Endothelial cell of umbilical vein (primary cell): ENCODE measurements at regions of chr5 and their contacts with region 1.

Region 1: GRCh38 chr5:142713121-142713706 is 27.3 kb upstream of the FGF1 start:
- DNase-seq: peak; percentile 90
- H3K4me3 ChIP-seq: peak overlapping the region in 2 of 3 experiments; percentile 39 to 44
- H3K27ac ChIP-seq: peak overlapping the region; percentile 43
- H3K4me1 ChIP-seq: peaks cover 11% of the 10 kb centered on the region
- H3K27me3 ChIP-seq: peaks cover 0 to 5% of the 10 kb centered on the region in 2 experiments
- CTCF ChIP-seq: peak; percentile 83 to 98
- POLR2A ChIP-seq: no peak

Region 2: DNA sequence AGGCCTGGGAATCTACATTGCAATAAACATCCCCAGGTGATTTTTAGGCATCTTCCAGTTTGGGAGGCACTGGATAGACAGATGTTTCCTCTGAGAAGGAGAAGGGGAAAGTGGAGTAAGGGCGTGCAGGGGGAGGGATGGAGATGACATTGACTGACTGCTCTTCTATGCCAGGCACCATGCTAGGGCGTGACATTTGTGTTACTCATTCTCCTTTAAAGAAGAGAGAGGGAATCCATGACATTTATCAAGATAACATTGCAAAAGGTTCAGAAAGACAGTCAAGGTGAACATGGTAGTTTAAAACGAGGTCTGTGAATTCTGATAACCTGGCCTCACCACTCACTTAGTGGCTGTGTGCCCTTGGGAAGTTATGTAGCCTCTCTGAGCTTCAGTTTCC is 63.2 kb before region 1 on chr5:
- CTCF ChIA-PET with region 1: interaction called, 80 read pairs
- POLR2A ChIA-PET with region 1: no interaction called
- dilution Hi-C with region 1: no loop called
- intact Hi-C with region 1: loop called (anchors 1 kb)
- DNase-seq: no peak
- H3K4me3 ChIP-seq: no peak overlapping the region
- H3K27ac ChIP-seq: no peak overlapping the region
- H3K4me1 ChIP-seq: peaks cover 6% of the 10 kb centered on the region
- H3K27me3 ChIP-seq: peaks cover 2 to 5% of the 10 kb centered on the region in 2 experiments
- CTCF ChIP-seq: no peak
- POLR2A ChIP-seq: no peak

Region 3: GRCh38 chr5:142699184-142699720 is 14.0 kb before region 1 on chr5:
- CTCF ChIA-PET with region 1: interaction called, 23 read pairs
- POLR2A ChIA-PET with region 1: no interaction called
- dilution Hi-C with region 1: no loop called
- intact Hi-C with region 1: no loop called
- DNase-seq: peak; percentile 83
- H3K4me3 ChIP-seq: no peak overlapping the region
- H3K27ac ChIP-seq: no peak overlapping the region
- H3K4me1 ChIP-seq: no peaks in the 10 kb centered on the region
- H3K27me3 ChIP-seq: peaks cover 0 to 6% of the 10 kb centered on the region in 2 experiments
- CTCF ChIP-seq: peak; percentile 91 to 93
- POLR2A ChIP-seq: no peak

Region 4: DNA sequence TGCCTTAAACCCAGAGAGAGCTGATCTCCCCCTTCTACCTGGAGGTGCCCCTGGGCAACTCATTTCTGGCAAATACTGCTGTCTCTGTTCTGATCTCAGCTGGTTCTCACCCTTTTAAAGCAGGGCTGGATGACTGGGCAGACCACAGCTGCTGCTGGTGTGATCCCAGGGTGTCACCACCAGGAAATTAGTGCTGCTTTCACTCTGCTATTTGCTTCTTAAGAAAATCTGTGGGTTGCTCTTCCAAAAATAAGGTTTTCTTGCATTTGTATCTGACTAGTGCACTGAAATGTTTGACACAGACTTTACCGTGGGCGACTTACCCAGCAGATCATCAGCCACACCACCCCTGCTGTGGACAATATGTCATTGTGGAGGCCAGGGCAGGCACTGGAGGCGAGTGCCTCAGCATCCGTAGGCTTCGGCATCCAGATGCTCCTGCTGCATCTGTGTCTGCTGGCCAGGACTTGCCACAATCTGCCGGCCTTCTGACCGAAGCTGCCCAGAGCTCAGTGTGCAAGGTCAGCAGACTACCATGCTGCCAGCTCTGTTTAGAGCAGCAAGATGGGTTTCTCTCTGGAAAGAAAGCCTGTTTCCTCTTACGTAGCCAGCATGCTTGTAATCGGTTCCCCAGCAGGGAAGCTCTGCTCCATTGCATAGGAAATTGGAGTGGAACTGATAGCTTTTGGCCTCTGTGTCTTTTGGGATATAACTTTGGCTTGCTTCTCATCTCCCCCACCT is 70.6 kb after region 1 on chr5:
- CTCF ChIA-PET with region 1: interaction called, 13 read pairs
- POLR2A ChIA-PET with region 1: no interaction called
- dilution Hi-C with region 1: no loop called
- intact Hi-C with region 1: no loop called
- DNase-seq: no peak
- H3K4me3 ChIP-seq: no peak overlapping the region
- H3K27ac ChIP-seq: no peak overlapping the region
- H3K4me1 ChIP-seq: peaks cover 8% of the 10 kb centered on the region
- H3K27me3 ChIP-seq: no peaks in the 10 kb centered on the region
- CTCF ChIP-seq: no peak
- POLR2A ChIP-seq: no peak

Region 5: DNA sequence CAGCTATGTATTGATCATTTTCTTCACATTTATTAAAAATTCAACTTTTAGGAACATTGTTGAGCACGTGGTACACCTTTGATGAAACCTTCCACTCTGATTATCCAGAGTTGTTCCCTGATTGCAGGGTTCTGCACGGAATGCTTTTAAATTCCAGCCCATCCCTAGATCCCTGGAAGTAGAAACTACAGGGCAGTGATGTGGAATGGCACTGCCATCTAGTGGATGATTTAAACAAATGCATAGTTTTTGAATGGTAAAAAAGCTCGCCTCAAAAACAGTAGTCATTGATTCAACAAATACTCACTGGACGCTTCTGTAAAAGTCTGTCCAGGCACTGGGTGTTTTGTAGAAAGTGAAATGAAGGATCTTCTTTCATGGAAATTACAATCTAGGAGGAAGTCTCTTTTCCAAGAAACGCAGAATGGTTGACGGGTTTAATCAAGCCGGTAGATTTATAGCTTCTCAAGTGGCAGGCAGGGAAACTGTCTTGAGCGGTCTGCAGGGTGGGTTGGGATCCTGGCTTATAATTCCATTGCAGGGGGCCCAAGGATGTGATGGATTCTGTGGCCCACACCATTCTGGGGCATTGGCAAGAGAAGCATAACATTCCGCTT is 175.4 kb after region 1 on chr5:
- CTCF ChIA-PET with region 1: interaction called, 1,173 read pairs
- POLR2A ChIA-PET with region 1: no interaction called
- dilution Hi-C with region 1: loop called (anchors 25 kb)
- intact Hi-C with region 1: loop called (anchors 1 kb)
- DNase-seq: peak; percentile 55
- H3K4me3 ChIP-seq: no peak overlapping the region
- H3K27ac ChIP-seq: no peak overlapping the region
- H3K4me1 ChIP-seq: peaks cover 3% of the 10 kb centered on the region
- H3K27me3 ChIP-seq: no peaks in the 10 kb centered on the region
- CTCF ChIP-seq: peak; percentile 50 to 60
- POLR2A ChIP-seq: no peak

Region 6: DNA sequence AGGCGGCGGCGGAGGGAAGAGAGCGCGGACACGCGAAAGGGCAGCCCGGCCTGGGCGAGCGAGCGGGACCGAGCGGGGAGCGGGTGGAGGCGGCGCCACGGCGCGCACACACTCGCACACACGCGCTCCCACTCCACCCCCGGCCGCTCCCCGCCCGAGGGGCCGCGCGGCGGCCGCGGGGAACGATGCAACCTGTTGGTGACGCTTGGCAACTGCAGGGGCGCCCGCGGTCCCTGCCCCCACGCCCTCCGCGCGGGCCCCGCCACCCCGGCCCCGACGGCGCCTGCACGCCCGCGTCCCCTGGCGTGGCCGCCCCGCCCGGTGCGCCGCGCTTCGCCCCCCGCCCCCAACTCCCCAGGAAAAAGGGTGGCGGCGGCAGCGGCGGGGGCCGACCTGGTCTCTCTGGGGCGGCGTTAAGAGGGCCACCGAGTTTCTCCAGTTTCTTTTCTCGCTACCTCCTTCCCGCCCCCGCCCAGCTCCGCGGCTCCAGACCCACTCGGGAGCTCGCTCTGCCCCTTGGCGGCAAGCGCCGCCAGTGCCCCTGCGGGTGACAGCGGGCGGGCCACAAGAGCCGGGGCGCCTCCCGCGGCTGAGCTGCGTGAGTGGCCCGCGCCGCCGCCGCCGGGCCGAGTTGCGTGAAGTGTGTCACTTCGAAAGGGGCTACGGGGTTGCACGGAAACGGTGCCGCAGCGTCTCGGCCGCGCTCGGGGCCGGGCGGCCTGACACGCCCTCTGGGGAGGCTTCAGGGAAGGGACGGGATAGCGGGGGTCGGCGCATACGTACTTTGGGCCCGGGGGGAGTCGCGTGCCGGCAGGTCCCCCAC is 690.6 kb after region 1 on chr5 and contains the start of gene NR3C1:
- CTCF ChIA-PET with region 1: no interaction called
- POLR2A ChIA-PET with region 1: no interaction called
- dilution Hi-C with region 1: no loop called
- intact Hi-C with region 1: loop called (anchors 10 kb)
- DNase-seq: peak; percentile 78
- H3K4me3 ChIP-seq: peak within 1 kb of the TSS; percentile 64 to 94 (median 87)
- H3K27ac ChIP-seq: peak within 1 kb of the TSS; percentile 94
- H3K4me1 ChIP-seq: peaks cover 39% of the 10 kb centered on the region
- H3K27me3 ChIP-seq: no peaks in the 10 kb centered on the region
- CTCF ChIP-seq: peak; percentile 16 to 62
- POLR2A ChIP-seq: no peak
- total RNA-seq, gene NR3C1: 17.0 and 21.2 TPM in 2 replicates